Calu3 (cell line): ENCODE measurements at regions of chr3 and their contacts with region 1.

Region 1: GRCh38 chr3:138124706-138125355 is 7.4 kb downstream of the A4GNT start:
- DNase-seq: no peak
- H3K4me3 Mint-ChIP-seq: no peak overlapping the region
- H3K27ac Mint-ChIP-seq: no peak overlapping the region
- H3K4me1 Mint-ChIP-seq: no peaks in the 10 kb centered on the region
- H3K27me3 Mint-ChIP-seq: no peaks in the 10 kb centered on the region
- CTCF ChIP-seq: no peak

Region 2: DNA sequence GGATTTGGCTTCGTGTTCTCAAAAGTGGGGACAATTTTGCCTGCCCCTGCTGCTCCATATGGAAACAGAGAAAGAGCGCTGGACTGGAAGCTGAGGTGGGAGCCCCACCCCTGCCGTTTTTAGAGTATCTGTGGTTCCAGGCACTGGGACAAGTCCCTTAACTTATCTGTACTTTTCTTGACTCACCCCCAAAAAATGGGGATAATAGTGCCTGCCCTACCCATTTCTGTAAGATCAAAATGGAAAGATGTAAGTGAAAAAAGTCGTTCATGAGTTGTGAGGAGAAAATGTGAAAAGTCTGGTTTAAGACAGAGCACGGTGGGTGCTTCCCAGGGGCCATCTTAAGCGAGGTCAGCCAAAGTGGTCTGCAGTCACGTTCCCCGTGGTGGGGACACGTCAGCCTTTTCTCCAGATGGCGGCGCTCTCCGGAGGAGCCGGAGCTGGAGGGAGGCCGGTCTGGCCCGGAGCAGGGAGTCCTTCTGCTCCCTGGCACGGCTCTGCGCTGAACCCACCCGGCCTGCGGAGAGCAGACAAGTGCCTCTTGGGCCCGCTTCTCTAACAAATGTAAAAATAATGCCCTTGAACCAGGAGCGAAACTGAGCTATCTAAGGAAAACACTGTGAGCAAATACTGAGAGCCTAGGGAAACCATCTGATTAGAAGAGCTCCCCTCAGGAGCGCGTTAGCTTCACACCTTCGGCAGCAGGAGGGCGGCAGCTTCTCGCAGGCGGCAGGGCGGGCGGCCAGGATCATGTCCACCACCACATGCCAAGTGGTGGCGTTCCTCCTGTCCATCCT is 115.2 kb before region 1 on chr3 and contains the start of gene CLDN18:
- CTCF ChIA-PET with region 1: interaction called, 10 read pairs
- intact Hi-C with region 1: no loop called
- DNase-seq: no peak
- H3K4me3 Mint-ChIP-seq: no peak within 1 kb of the TSS
- H3K27ac Mint-ChIP-seq: no peak within 1 kb of the TSS
- H3K4me1 Mint-ChIP-seq: no peaks in the 10 kb centered on the region
- H3K27me3 Mint-ChIP-seq: peaks cover 11% of the 10 kb centered on the region
- CTCF ChIP-seq: no peak
- total RNA-seq, gene CLDN18: 0.85 and 3.3 TPM in 2 replicates

Region 3: GRCh38 chr3:138186803-138187295 is 62.0 kb after region 1 on chr3:
- CTCF ChIA-PET with region 1: no interaction called
- intact Hi-C with region 1: no loop called
- DNase-seq: peak; percentile 96
- H3K4me3 Mint-ChIP-seq: peak overlapping the region; percentile 92
- H3K27ac Mint-ChIP-seq: peak overlapping the region; percentile 98
- H3K4me1 Mint-ChIP-seq: peaks cover 32% of the 10 kb centered on the region
- H3K27me3 Mint-ChIP-seq: no peaks in the 10 kb centered on the region
- CTCF ChIP-seq: no peak